AG04449 (cell line): ENCODE measurements at regions of chr4 and their contacts with region 1.

Region 1: GRCh38 chr4:74228691-74229640 is 71.0 kb downstream of the MTHFD2L start:
- DNase-seq: no peak
- H3K4me3 ChIP-seq: no peak overlapping the region
- CTCF ChIP-seq: peak; percentile 76

Region 2: DNA sequence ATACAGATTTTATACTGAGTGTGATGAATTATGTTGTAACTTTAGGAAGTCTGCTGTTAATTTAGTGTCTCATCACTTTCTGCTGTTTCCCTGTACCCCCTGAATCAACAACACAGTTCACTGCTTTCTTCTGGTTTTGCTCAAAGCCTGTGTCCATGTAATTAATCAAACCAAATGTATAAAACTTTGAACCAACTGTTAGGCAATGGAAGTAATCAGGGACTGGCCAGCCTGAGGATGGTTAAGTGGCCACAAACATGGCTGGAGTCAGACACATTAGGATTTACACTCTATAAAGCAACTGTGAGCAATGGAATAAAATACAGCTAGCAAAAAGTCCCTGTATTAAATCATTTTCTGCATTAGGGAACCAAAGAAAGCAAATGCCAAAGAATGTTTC is 317.2 kb before region 1 on chr4:
- CTCF ChIA-PET with region 1: no interaction called
- POLR2A ChIA-PET with region 1: no interaction called
- DNase-seq: no peak
- H3K4me3 ChIP-seq: no peak overlapping the region
- CTCF ChIP-seq: no peak

Region 3: DNA sequence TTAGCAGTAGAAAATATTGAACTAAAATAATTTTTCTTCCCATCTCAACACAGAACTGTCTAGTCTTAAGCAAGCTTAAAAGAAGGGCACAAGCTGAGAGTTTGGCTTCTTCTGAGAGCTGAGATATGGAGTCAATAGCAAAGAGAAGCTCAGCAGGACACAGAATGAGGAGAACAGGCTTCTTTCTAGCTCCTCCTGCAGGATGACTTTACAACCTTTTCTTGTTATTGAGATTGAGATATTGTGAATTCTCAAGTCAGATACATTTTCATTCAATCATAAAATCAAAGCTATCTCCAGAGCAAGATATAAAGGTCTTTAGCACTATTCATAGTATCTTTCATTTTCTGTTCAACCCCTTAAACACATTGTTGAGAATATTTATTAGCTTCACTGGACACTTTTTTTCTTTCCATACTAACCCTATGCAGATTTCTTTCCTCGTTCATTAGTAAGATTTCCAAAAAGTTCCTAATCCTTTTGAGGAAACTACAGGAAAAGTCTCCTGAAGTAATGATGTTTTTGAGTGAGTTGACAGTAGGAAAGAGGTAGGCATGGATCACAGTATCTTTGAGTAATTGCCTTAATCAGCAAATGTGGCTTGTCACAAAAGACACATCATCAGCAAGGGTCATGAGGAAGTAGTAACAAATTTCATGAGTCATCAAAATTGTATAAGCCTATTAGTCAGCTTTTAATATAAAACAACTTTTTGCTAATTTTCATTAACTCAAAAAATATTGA is 172.7 kb before region 1 on chr4:
- CTCF ChIA-PET with region 1: no interaction called
- POLR2A ChIA-PET with region 1: no interaction called
- DNase-seq: no peak
- H3K4me3 ChIP-seq: no peak overlapping the region
- CTCF ChIP-seq: peak; percentile 11

Region 4: DNA sequence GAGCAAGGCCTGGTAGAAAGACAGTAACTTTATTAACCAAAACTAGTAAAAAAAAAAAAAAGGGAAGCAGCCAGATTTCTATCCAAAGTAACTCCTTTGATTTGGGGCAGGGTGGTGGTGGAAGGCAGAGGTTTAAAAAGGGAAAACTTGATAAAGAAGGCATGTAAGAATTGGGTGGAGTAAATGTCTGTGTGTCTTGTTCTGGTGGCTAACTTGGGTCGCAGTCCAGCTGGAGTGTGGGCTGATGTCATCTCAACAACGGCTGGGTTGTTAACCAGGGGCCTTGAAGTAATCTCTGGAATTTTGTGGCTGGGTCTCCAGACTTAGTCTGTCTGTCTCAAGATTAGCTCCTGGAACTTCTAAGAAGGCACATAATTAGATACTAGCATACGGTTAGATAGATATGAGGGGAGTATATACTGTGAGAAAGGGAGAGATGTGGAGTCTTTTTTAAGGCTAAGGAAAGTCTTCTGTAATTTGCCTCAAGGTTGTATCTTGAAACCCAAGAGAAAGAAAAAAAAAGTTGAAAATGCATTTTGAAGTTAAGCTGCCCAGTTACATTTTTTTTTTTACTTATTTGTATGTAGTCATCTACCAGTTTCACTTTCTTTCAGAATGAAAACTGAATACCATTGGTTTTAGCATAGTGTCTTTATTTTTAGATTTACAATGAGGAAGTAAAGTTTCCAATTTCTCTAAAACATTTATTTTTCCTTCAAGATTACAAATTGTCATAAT is 22.7 kb before region 1 on chr4:
- CTCF ChIA-PET with region 1: interaction called, 12 read pairs
- POLR2A ChIA-PET with region 1: no interaction called
- DNase-seq: no peak
- H3K4me3 ChIP-seq: no peak overlapping the region
- CTCF ChIP-seq: no peak

Region 5: GRCh38 chr4:74255096-74255495 is 26.1 kb after region 1 on chr4:
- CTCF ChIA-PET with region 1: interaction called, 11 read pairs
- POLR2A ChIA-PET with region 1: no interaction called
- DNase-seq: no peak
- H3K4me3 ChIP-seq: no peak overlapping the region
- CTCF ChIP-seq: no peak

Region 6: DNA sequence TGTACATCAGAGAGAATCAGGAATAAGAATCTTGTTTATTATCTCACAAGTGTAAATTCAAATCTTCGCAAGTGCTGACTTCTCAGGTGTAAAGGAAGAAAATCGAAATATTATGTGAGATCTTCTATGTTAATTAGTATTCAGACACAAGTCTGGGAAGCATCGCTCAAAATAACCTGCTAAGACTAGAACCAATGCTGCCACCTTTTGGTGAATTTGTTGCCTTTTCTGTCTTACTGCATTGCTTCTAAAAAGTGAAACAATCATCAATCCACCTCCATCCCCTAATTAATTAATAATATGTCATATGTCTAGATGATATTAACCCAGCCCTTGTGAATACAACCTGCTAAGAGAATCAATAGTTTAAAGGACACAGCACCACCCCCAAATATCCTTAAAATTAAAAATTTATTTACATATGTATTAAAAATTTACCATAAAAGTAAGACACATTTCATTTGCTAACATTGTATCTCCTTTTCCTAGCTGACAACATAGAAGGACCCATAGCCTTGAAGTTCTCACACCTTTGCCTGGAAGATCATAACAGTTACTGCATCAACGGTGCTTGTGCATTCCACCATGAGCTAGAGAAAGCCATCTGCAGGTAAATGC is 82.8 kb after region 1 on chr4:
- CTCF ChIA-PET with region 1: interaction called, 36 read pairs
- POLR2A ChIA-PET with region 1: no interaction called
- DNase-seq: no peak
- H3K4me3 ChIP-seq: no peak overlapping the region
- CTCF ChIP-seq: peak; percentile 56

Region 7: DNA sequence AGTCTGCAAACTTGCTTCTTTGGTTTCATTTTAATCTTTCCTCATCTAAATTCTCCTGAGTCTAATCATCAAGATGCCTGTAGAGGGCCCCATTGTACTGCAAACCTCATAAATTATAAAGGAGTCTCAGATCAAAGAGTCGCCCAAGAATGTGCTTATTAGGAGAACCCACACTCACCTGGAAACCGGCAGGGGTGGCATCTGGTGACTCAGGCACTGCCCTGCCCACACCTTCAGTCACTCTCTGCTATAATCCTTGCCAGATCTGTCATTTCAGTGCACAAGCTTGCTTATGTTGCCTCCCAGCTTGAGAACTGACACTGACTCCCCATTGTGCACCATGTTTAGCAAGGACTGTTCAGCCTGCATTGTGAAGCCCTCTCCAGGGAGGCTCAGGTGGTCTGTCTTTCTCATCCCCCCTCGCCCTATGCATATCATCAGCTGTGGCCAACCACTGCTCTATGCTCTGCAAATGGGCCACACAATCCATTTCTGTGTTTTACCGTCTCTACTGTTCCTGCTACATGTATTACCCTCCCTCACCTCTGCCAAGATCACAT is 91.7 kb after region 1 on chr4:
- CTCF ChIA-PET with region 1: interaction called, 10 read pairs
- POLR2A ChIA-PET with region 1: no interaction called
- DNase-seq: no peak
- H3K4me3 ChIP-seq: no peak overlapping the region; the same call in 1 of the 2 replicates
- CTCF ChIP-seq: peak; percentile 19